Gastrocnemius medialis (tissue), 4 donors: ENCODE measurements at regions of chr11 and their contacts with region 1.

Region 1: DNA sequence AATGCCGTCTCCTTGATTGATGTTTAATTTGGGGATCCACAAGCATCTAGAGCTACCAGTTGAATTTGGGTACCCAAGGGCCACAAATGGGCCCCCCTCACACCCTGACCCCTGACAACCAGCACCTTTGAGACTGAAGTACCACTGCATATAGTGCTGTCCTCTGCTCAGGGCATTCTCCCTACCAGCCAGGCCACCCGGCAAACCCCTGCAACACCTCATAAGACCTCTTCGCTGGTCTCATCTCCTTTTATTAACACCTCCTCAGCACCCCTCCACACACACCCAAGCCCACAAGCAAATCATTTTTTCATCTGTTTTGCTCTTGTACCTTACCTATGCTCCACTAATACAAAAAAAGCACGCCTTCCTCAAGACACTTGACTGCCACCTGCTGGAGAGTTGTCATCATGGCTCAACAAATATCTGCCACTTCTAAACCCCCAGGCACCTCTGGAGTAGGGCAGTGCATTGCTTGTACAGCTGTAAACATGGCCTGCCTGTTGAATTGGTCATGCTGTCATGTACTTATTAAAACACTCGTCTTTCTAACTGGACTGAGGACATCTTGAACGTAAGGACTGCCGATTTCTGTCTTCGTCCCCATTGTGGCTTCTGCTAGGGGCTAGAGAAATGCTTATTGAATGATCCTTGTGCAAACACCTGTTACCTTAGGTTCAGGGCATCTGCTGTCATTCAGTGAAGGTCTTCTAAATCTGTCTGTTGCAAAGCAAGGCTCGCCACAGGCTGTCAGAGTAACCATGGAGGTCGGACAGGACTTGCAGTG is 66.5 kb downstream of the BMAL1 start:
- DNase-seq: peak in 1 of 2 donors; percentile 55
- ATAC-seq: peak; percentile 60 to 80
- H3K4me3 ChIP-seq: no peak overlapping the region
- H3K27ac ChIP-seq: no peak overlapping the region
- H3K4me1 ChIP-seq: peaks cover 12 to 13% of the 10 kb centered on the region in 2 donors
- H3K27me3 ChIP-seq: no peaks in the 10 kb centered on the region
- CTCF ChIP-seq: peak; percentile 72 to 89 (median 82)
- POLR2A ChIP-seq: no peak

Region 2: DNA sequence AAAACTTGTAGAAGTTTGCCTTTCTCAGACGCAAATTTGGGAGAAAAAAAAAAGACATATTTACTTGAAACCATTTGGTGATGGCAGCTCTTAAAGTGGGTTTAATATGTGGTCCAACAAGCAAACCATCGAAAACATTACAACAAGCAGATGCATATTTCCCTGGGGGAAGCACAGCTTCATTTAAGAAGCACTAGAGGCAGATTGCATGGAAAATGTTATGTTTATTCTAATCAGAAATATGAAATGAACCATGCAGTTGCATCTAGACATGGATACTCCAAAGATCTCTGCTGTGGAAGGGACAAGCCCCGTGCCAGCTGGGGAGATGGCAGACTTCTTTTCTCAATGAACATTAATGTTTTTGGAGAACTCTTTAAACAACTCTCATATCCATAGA is 1024.1 kb before region 1 on chr11:
- in situ Hi-C with region 1: no loop called
- intact Hi-C with region 1: loop called (anchors 10 kb)
- DNase-seq: no peak
- ATAC-seq: no peak
- H3K4me3 ChIP-seq: no peak overlapping the region
- H3K27ac ChIP-seq: no peak overlapping the region
- H3K4me1 ChIP-seq: no peaks in the 10 kb centered on the region
- H3K27me3 ChIP-seq: no peaks in the 10 kb centered on the region
- CTCF ChIP-seq: no peak
- POLR2A ChIP-seq: no peak

Region 3: GRCh38 chr11:12963792-12964536 is 380.2 kb before region 1 on chr11:
- in situ Hi-C with region 1: loop called (anchors 25 kb)
- intact Hi-C with region 1: loop called (anchors 10 kb)
- DNase-seq: peak; percentile 23 to 28
- ATAC-seq: peak; percentile 58 to 82
- H3K4me3 ChIP-seq: no peak overlapping the region
- H3K27ac ChIP-seq: no peak overlapping the region
- H3K4me1 ChIP-seq: no peaks in the 10 kb centered on the region
- H3K27me3 ChIP-seq: no peaks in the 10 kb centered on the region
- CTCF ChIP-seq: peak; percentile 47 to 89 (median 73)
- POLR2A ChIP-seq: no peak

Region 4: GRCh38 chr11:13210424-13210823 is 133.7 kb before region 1 on chr11:
- in situ Hi-C with region 1: loop called in 2 of 4 experiments (anchors 5 to 10 kb)
- intact Hi-C with region 1: loop called (anchors 2 kb)
- DNase-seq: peak; percentile 23 to 47
- ATAC-seq: peak; percentile 59 to 70
- H3K4me3 ChIP-seq: no peak overlapping the region
- H3K27ac ChIP-seq: no peak overlapping the region
- H3K4me1 ChIP-seq: no peaks in the 10 kb centered on the region
- H3K27me3 ChIP-seq: no peaks in the 10 kb centered on the region
- CTCF ChIP-seq: peak; percentile 28 to 65 (median 64)
- POLR2A ChIP-seq: no peak